Vagina (tissue), 2 donors: ENCODE measurements at regions of chr6 and their contacts with region 1.

Region 1: GRCh38 chr6:32087574-32088486 is 21.3 kb downstream of the TNXB start:
- DNase-seq: no peak
- H3K4me3 ChIP-seq: peak overlapping the region; percentile 32 to 37
- H3K27ac ChIP-seq: peak overlapping the region; percentile 96
- H3K4me1 ChIP-seq: peaks cover 46% of the 10 kb centered on the region
- H3K27me3 ChIP-seq: no peaks in the 10 kb centered on the region
- CTCF ChIP-seq: peak in 2 of 3 experiments; percentile 25 to 53
- POLR2A ChIP-seq: no peak

Region 2: GRCh38 chr6:32108094-32108627 is 20.3 kb after region 1 on chr6:
- intact Hi-C with region 1: loop called (anchors 2 kb)
- DNase-seq: no peak
- H3K4me3 ChIP-seq: peak overlapping the region; percentile 58 to 60
- H3K27ac ChIP-seq: peak overlapping the region; percentile 94
- H3K4me1 ChIP-seq: peaks cover 85% of the 10 kb centered on the region
- H3K27me3 ChIP-seq: no peaks in the 10 kb centered on the region
- CTCF ChIP-seq: no peak
- POLR2A ChIP-seq: no peak